Activated CD4-positive, alpha-beta memory T cell treated with anti-CD3 and anti-CD28 coated beads for 36 hours (primary cell): ENCODE measurements at regions of chr1 and their contacts with region 1.

Region 1: DNA sequence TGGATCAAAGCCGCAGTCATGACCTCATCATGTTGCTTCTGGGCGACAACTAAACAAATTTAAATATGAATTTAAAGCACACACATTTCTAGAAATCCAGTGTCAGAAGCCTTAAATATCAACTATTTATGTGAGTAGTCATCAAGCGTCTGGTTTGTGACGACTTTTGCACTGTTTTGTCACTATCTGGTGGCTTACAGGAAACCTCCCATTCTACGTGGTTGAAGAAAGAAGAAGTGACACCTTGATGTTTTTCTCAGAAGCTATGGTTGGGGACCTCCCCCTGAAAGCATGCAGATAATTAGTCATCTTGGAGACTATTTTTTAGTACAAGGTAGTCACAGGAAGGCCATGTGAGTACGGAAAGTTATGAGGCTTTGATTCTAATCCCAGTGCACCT is 58.5 kb downstream of the TENT5C start:
- DNase-seq: peak; percentile 76
- H3K4me3 Mint-ChIP-seq: no peak overlapping the region
- H3K27ac Mint-ChIP-seq: peak overlapping the region; percentile 68
- H3K4me1 Mint-ChIP-seq: peaks cover 78% of the 10 kb centered on the region
- H3K27me3 Mint-ChIP-seq: no peaks in the 10 kb centered on the region

Region 2: GRCh38 chr1:116763787-116764465 is 900.4 kb before region 1 on chr1:
- CTCF ChIA-PET with region 1: no interaction called
- POLR2A ChIA-PET with region 1: interaction called, 3 read pairs
- intact Hi-C with region 1: loop called (anchors 5 kb)
- DNase-seq: peak; percentile 79
- H3K4me3 Mint-ChIP-seq: peak overlapping the region; percentile 99
- H3K27ac Mint-ChIP-seq: peak overlapping the region; percentile 99
- H3K4me1 Mint-ChIP-seq: peaks cover 88% of the 10 kb centered on the region
- H3K27me3 Mint-ChIP-seq: peaks cover 3% of the 10 kb centered on the region

Region 3: DNA sequence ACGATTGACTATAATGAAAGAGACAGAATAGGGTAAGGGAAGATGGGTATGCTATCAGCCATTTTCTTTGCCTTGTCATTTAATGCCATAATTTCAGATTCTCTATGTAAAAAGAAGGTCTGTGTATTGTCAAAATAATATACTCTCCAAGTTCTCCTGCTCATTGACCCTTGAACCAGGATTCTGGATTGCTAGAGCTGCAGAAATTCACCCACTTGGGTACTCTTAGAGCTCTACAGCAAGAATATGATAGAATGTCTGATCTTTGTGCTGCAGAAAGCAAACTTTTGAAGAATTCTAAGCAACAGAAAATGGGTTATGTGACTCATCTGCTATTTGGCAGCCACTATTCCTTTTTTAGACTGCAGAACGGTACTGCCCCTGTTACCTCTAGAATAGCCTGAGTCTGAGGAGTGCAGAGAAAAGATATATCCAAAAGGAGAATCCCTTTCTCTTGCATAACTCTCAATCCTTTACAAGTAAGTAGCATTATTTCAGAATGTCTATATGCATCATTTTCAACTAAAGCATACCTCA is 136.7 kb before region 1 on chr1:
- CTCF ChIA-PET with region 1: interaction called, 3 read pairs
- POLR2A ChIA-PET with region 1: no interaction called
- intact Hi-C with region 1: loop called (anchors 1 kb)
- DNase-seq: no peak
- H3K4me3 Mint-ChIP-seq: no peak overlapping the region
- H3K27ac Mint-ChIP-seq: no peak overlapping the region
- H3K4me1 Mint-ChIP-seq: peaks cover 21% of the 10 kb centered on the region
- H3K27me3 Mint-ChIP-seq: no peaks in the 10 kb centered on the region

Region 4: DNA sequence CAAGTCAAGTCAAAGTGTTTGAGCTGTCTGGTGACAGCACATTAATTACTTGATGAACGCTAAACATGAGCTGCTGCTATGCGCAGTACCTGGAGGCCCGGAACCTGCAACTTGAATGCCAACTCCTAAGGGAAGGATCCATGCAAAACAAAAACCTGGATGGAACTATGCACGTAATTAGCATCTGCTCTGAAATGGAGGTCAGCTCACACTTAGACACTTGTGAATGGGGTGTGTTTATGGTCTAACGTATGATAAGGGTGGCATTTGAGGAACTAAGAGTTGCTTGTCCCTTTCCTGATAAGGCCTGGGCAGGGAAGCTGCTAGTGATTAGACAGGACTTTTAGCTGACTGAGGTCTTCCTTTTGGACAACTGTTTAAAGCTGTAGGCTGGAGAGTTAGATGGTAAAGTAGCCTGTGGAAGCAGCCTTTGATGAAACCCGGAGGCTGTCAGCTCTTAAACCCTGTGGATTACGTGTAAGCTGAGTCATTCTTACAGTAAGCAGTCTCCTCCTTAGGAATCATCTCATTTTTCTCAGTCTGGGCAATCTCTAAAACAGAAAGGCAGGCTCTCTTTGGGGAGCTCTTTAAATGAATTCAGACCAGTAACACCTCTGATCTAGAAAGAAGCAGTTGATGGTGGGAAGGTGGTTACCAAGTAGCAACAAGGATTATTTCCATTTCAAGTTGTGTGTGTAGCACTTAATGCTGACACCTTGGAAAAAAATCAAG is 51.6 kb before region 1 on chr1:
- CTCF ChIA-PET with region 1: interaction called, 6 read pairs
- POLR2A ChIA-PET with region 1: interaction called, 83 read pairs
- intact Hi-C with region 1: loop called (anchors 1 kb)
- DNase-seq: peak; percentile 23
- H3K4me3 Mint-ChIP-seq: no peak overlapping the region
- H3K27ac Mint-ChIP-seq: peak overlapping the region; percentile 64
- H3K4me1 Mint-ChIP-seq: peaks cover 86% of the 10 kb centered on the region
- H3K27me3 Mint-ChIP-seq: no peaks in the 10 kb centered on the region

Region 5: GRCh38 chr1:117895482-117896114 is 231.3 kb after region 1 on chr1:
- CTCF ChIA-PET with region 1: interaction called, 4 read pairs
- POLR2A ChIA-PET with region 1: no interaction called
- intact Hi-C with region 1: loop called (anchors 5 kb)
- DNase-seq: peak; percentile 64
- H3K4me3 Mint-ChIP-seq: no peak overlapping the region
- H3K27ac Mint-ChIP-seq: no peak overlapping the region
- H3K4me1 Mint-ChIP-seq: peaks cover 4% of the 10 kb centered on the region
- H3K27me3 Mint-ChIP-seq: no peaks in the 10 kb centered on the region